WTC11 (cell line): ENCODE measurements at regions of chr10 and their contacts with region 1.

Region 1: GRCh38 chr10:104274762-104275721 is 6.1 kb downstream of the GSTO2 start:
- DNase-seq: peak; percentile 79
- ATAC-seq: peak; percentile 94
- H3K4me3 Mint-ChIP-seq: peak overlapping the region; percentile 70
- H3K27ac Mint-ChIP-seq: no peak overlapping the region
- H3K4me1 Mint-ChIP-seq: peaks cover 10% of the 10 kb centered on the region
- H3K27me3 Mint-ChIP-seq: peaks cover 12% of the 10 kb centered on the region
- CTCF ChIP-seq: peak; percentile 71

Region 2: DNA sequence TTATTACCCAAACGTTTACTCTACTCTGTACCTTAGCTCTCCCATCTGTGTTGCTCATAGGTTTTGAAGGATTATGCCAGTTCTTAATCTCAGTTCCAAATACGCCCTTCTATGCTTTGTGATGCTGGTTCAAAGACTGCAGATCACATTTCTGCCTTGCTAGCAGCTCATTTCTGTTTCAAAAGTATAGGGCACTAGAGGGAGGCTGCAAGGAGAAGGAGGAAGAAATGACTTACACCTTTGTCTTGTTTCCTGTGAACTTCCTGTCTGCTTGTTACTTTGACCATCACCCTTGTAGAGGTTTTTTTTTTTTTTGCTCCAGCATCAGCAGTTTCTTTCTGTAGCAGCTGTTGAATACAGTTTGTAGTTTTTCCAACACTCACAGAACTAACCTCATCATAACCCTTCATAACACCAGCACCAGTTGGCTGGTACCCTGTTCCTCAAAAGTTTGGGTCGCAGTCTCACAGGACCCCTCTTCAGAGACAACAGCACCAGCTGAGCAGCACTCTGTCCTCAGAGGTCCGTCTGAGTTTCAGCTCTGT is 291.6 kb before region 1 on chr10:
- CTCF ChIA-PET with region 1: interaction called, 11 read pairs
- POLR2A ChIA-PET with region 1: no interaction called
- DNase-seq: no peak
- ATAC-seq: no peak
- H3K4me3 Mint-ChIP-seq: no peak overlapping the region
- H3K27ac Mint-ChIP-seq: peak overlapping the region; percentile 7; the same call in 1 of the 2 replicates
- H3K4me1 Mint-ChIP-seq: peaks cover 13% of the 10 kb centered on the region
- H3K27me3 Mint-ChIP-seq: no peaks in the 10 kb centered on the region
- CTCF ChIP-seq: no peak

Region 3: GRCh38 chr10:104054430-104054829 is 220.6 kb before region 1 on chr10:
- CTCF ChIA-PET with region 1: interaction called, 19 read pairs
- POLR2A ChIA-PET with region 1: no interaction called
- DNase-seq: no peak
- ATAC-seq: no peak
- H3K4me3 Mint-ChIP-seq: no peak overlapping the region
- H3K27ac Mint-ChIP-seq: no peak overlapping the region
- H3K4me1 Mint-ChIP-seq: peaks cover 24% of the 10 kb centered on the region
- H3K27me3 Mint-ChIP-seq: no peaks in the 10 kb centered on the region
- CTCF ChIP-seq: no peak

Region 4: DNA sequence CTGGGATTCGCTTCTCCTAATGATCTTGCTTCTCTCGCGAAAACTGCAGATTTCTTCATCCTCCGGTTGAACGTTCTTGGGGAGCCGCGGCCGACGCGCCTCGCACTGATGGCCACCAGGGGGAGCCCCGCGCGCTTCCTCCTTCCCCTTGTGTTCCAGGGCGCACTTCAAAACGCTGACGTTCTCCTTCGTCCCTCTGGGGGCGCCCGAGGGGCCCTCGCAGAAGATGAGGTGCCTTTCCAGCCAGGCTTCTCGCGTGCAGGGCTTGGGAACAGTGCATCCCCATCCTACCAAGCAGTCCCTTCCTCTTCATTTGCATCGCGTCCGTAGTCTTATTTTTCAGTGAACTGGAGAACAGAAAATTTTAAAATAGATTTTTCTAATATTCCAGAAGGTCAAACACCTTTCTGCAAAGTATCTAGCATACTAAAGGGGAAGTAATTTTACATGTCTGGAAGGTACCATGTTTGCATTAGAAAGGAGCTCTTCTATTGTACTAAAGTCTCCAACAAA is 16.5 kb after region 1 on chr10:
- CTCF ChIA-PET with region 1: interaction called, 126 read pairs
- POLR2A ChIA-PET with region 1: no interaction called
- DNase-seq: peak; percentile 90
- ATAC-seq: peak; percentile 99
- H3K4me3 Mint-ChIP-seq: peak overlapping the region; percentile 40
- H3K27ac Mint-ChIP-seq: no peak overlapping the region
- H3K4me1 Mint-ChIP-seq: peaks cover 23% of the 10 kb centered on the region
- H3K27me3 Mint-ChIP-seq: peaks cover 7% of the 10 kb centered on the region
- CTCF ChIP-seq: peak; percentile 99

Region 5: GRCh38 chr10:104337974-104338735 is 63.1 kb after region 1 on chr10 and contains the start of gene ITPRIP:
- CTCF ChIA-PET with region 1: interaction called, 13 read pairs
- POLR2A ChIA-PET with region 1: interaction called, 3 read pairs
- DNase-seq: peak; percentile 68
- ATAC-seq: peak; percentile 63
- H3K4me3 Mint-ChIP-seq: peak within 1 kb of the TSS; percentile 93
- H3K27ac Mint-ChIP-seq: peak within 1 kb of the TSS; percentile 99
- H3K4me1 Mint-ChIP-seq: peaks cover 60% of the 10 kb centered on the region
- H3K27me3 Mint-ChIP-seq: no peaks in the 10 kb centered on the region
- CTCF ChIP-seq: no peak
- total RNA-seq, gene ITPRIP: 13.0 to 16.8 TPM (median 13.4 TPM) in 3 replicates